ENCODE measurements at regions of chr12 and their contacts with region 1.

Region 1: DNA sequence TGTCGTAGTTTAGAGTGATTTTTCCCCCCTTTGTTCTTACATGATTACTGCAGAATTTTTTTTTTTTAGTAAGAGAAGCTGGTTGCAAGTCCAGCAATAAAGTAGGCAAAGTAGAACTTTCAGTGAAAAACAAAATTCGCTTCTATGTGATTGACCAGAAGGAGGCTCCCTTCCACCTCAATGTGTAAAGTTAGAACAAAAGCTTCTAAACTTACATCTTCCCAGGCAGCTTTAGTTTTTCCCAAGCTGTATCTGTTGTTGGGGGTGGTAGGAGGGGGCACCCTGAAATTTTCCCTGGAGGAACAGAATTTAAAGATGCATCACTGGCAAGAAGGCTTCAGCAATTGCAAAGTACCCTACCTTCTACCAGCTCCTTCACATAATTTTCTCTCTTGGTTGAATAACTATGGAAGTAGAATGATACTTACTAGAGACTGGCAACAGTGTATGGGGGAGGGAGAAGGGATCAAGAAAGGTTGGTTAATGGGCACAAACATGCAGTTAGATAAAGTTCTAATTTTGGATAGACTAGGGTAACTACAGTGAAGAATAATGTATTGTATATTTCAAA is 87.3 kb upstream of the E2F7 start:
- DNase-seq: peak; percentile 47
- H3K4me3 ChIP-seq: no peak overlapping the region
- H3K27ac ChIP-seq: no peak overlapping the region
- H3K4me1 ChIP-seq: no peaks in the 10 kb centered on the region
- H3K27me3 ChIP-seq: peaks cover 11% of the 10 kb centered on the region
- CTCF ChIP-seq: peak; percentile 58

Region 2: GRCh38 chr12:77324763-77325468 is 172.2 kb after region 1 on chr12:
- CTCF ChIA-PET with region 1: interaction called, 6 read pairs
- POLR2A ChIA-PET with region 1: no interaction called
- intact Hi-C with region 1: loop called (anchors 2 kb)
- DNase-seq: peak; percentile 82
- H3K4me3 ChIP-seq: peak overlapping the region; percentile 49
- H3K27ac ChIP-seq: no peak overlapping the region
- H3K4me1 ChIP-seq: no peaks in the 10 kb centered on the region
- H3K27me3 ChIP-seq: peaks cover 58% of the 10 kb centered on the region
- CTCF ChIP-seq: peak; percentile 60

Region 3: GRCh38 chr12:77493302-77494168 is 340.8 kb after region 1 on chr12:
- CTCF ChIA-PET with region 1: no interaction called
- POLR2A ChIA-PET with region 1: no interaction called
- intact Hi-C with region 1: no loop called
- DNase-seq: no peak
- H3K4me3 ChIP-seq: no peak overlapping the region
- H3K27ac ChIP-seq: no peak overlapping the region
- H3K4me1 ChIP-seq: no peaks in the 10 kb centered on the region
- H3K27me3 ChIP-seq: no peaks in the 10 kb centered on the region
- CTCF ChIP-seq: no peak

Measured in A673 (cell line).